ENCODE measurements at regions of chr5 and their contacts with region 1.

Region 1: GRCh38 chr5:172833686-172834414 is at the start of gene ERGIC1:
- DNase-seq: peak; percentile 95
- ATAC-seq: peak; percentile 69 to 86 (median 80)
- H3K4me3 ChIP-seq: peak within 1 kb of the TSS; percentile 68 to 87 (median 78)
- H3K27ac ChIP-seq: peak within 1 kb of the TSS; percentile 81 to 92 (median 86)
- H3K4me1 ChIP-seq: peaks cover 0 to 36% (median 11%) of the 10 kb centered on the region in 4 donors
- H3K27me3 ChIP-seq: no peaks in the 10 kb centered on the region
- CTCF ChIP-seq: no peak
- POLR2A ChIP-seq: peak; percentile 98
- total RNA-seq, gene ERGIC1: 103 to 264 (median 154) TPM

Region 2: DNA sequence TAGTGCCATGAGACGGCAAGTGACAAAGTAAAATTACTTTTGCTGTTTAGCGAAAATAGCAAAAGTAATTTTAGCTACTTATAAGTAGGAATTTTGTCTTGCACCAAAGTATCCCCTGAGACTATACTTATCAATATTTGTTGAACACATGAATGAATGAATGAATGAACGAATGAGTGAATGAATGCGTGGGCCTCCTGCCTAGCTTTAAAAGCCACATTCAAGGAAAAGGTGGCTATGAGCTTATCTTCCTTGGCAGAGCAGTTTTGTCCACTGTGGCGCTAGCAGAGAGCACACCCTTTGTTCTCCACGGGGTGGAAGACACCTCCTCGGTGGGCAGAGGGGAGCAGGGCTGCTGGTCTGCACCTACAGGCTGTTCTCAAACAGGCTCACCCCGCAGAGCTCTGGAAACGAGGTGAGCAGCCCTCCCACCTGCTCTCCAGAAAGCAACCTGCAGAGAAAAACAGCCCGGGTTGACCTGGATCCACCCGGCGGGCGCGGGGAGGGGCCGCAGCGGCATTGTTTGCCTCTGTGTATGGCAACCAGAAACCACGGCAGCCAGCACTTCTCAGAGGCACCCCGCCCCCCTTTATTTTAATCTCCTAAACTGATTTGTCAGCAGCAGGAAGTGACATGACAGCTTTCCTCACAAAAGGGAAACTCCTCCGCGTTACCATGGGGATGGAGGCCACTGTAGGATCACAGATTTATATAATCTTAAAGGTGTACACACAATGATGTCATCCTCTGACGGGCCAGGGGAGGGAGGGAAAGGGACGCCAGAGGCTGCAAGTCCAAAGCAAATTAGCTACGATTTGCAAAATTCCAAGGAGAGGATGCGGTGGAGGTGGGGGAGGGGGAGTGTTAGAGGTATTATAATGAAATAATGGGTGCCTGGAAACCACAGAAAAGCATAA is 68.7 kb before region 1 on chr5:
- intact Hi-C with region 1: no loop called
- DNase-seq: peak; percentile 92 to 97 (median 95)
- ATAC-seq: peak; percentile 48 to 76 (median 56)
- H3K4me3 ChIP-seq: peak overlapping the region; percentile 22 to 43 (median 22)
- H3K27ac ChIP-seq: peak overlapping the region; percentile 99 to 100 (median 99)
- H3K4me1 ChIP-seq: peaks cover 0 to 43% (median 4%) of the 10 kb centered on the region in 4 donors
- H3K27me3 ChIP-seq: no peaks in the 10 kb centered on the region
- CTCF ChIP-seq: no peak
- POLR2A ChIP-seq: peak; percentile 48

Region 3: DNA sequence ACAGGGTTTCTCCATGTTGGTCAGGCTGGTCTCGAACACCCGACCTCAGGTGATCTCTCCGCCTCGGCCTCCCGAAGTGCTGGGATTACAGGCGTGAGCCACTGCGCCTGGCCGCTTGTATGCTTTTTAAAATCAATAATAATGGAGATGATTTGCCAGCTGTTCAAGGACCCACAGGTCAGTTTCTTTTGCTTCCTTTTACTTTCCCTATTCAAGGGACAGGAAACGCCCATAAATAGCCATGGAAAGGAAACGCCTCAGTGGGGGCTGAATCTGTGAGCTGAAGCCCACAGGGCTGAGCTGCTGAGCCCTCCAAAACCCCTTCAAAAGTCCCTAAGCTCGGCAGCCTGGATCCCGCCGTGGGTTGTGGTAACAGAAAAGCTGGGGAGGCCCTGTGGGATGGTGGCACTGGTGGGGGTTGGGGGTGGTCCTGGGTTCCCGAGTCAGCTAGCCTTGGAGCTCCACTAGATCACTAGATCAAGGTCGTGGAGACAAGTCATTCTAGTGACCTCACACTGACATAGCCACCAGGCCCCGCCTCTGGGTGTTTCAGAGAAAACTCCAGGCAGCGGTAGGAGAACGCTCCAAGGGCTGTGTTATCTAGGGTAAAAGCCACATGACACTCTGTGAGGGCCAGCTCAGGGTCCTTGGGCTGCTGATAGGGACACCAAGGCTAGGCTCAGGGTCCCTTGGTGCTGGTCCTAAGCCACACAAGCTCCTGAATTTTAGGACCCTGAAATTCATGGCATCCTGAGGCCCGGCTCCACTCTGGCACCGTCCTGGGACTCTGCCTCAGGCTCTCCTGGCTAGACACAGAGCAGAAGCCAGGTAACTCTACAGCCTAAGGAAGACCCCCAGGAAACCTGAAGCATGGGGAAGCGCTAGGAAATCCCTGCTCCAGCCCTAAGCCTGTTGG is 44.8 kb before region 1 on chr5:
- intact Hi-C with region 1: loop called in 1 of 2 experiments (anchors 10 kb)
- DNase-seq: peak; percentile 83 to 94 (median 92)
- ATAC-seq: peak; percentile 82 to 94 (median 86)
- H3K4me3 ChIP-seq: peak overlapping the region in 1 of 3 donors; percentile 36
- H3K27ac ChIP-seq: peak overlapping the region; percentile 81 to 96 (median 92)
- H3K4me1 ChIP-seq: peaks cover 0 to 46% (median 6%) of the 10 kb centered on the region in 4 donors
- H3K27me3 ChIP-seq: no peaks in the 10 kb centered on the region
- CTCF ChIP-seq: no peak
- POLR2A ChIP-seq: peak; percentile 35

Measured in right lobe of liver (tissue), 6 donors.